Caco-2 (cell line): ENCODE measurements at regions of chr17 and their contacts with region 1.

Region 1: GRCh38 chr17:48555258-48556228 is 10.6 kb upstream of the HOXB2 start:
- DNase-seq: peak; percentile 58 to 70
- H3K4me3 ChIP-seq: peak overlapping the region; percentile 28
- H3K4me3 Mint-ChIP-seq: peak overlapping the region; percentile 49
- H3K27ac Mint-ChIP-seq: no peak overlapping the region
- H3K4me1 ChIP-seq: peaks cover 9% of the 10 kb centered on the region
- H3K4me1 Mint-ChIP-seq: peaks cover 7% of the 10 kb centered on the region
- H3K27me3 ChIP-seq: no peaks in the 10 kb centered on the region; the same call in 1 of the 2 replicates
- H3K27me3 Mint-ChIP-seq: no peaks in the 10 kb centered on the region
- CTCF ChIP-seq: no peak

Region 2: GRCh38 chr17:48492401-48493298 is 62.9 kb before region 1 on chr17:
- CTCF ChIA-PET with region 1: no interaction called
- POLR2A ChIA-PET with region 1: no interaction called
- intact Hi-C with region 1: loop called (anchors 2 kb)
- DNase-seq: peak; percentile 80 to 91
- H3K4me3 ChIP-seq: peak overlapping the region; percentile 15
- H3K4me3 Mint-ChIP-seq: peak overlapping the region; percentile 52
- H3K27ac Mint-ChIP-seq: no peak overlapping the region
- H3K4me1 ChIP-seq: peaks cover 14% of the 10 kb centered on the region
- H3K4me1 Mint-ChIP-seq: peaks cover 9% of the 10 kb centered on the region
- H3K27me3 ChIP-seq: peaks cover 5% of the 10 kb centered on the region; the same call in 1 of the 2 replicates
- H3K27me3 Mint-ChIP-seq: peaks cover 8% of the 10 kb centered on the region
- CTCF ChIP-seq: peak; percentile 99

Region 3: DNA sequence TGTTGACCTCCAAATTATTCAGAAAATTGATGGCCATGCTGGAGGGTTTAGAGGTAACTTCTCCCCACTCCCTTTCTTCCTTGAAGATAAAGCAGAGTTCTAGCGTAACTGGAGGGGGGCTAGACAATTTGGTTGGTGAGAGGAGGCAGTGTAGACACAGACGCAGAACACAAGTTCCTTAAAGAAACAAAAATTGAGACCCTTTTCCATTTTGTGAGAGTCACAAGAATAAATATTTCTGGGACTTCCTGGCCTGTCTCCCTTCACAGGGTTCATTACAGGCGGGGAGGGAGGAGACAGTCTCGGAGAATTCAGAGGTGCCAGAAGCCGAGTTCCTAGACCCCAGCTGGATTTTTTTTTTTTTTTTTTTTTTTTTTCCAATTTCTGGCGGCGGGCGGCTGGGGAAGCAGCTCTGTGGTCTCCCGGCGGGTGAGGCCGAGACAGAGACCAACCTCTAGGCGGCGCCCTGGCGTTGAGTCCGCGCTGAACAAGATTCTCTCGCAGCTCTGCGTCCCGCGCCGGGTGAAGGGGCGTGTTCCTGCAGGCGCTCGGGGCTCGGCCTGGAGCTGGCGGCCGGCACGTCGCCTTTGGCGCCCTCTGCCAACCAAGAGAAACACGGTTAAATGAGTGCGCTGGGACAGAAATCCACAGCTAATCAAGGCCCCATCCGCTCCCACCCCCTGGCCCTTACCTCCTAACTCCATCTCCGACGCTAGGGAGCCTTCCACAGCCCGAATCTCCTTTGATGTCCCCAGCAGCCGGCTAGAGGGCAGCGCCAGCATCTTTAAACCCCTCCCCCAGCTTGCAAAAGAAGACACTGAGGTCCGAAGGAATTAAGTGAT is 80.9 kb after region 1 on chr17:
- CTCF ChIA-PET with region 1: no interaction called
- POLR2A ChIA-PET with region 1: no interaction called
- intact Hi-C with region 1: no loop called
- DNase-seq: peak in 1 of 2 experiments; percentile 49
- H3K4me3 ChIP-seq: no peak overlapping the region
- H3K4me3 Mint-ChIP-seq: no peak overlapping the region
- H3K27ac Mint-ChIP-seq: no peak overlapping the region
- H3K4me1 ChIP-seq: peaks cover 5% of the 10 kb centered on the region
- H3K4me1 Mint-ChIP-seq: no peaks in the 10 kb centered on the region
- H3K27me3 ChIP-seq: no peaks in the 10 kb centered on the region
- H3K27me3 Mint-ChIP-seq: peaks cover 5% of the 10 kb centered on the region
- CTCF ChIP-seq: peak in 1 of 2 experiments; percentile 51